CD4-positive, alpha-beta T cell (primary cell): ENCODE measurements at regions of chr12 and their contacts with region 1.

Region 1: DNA sequence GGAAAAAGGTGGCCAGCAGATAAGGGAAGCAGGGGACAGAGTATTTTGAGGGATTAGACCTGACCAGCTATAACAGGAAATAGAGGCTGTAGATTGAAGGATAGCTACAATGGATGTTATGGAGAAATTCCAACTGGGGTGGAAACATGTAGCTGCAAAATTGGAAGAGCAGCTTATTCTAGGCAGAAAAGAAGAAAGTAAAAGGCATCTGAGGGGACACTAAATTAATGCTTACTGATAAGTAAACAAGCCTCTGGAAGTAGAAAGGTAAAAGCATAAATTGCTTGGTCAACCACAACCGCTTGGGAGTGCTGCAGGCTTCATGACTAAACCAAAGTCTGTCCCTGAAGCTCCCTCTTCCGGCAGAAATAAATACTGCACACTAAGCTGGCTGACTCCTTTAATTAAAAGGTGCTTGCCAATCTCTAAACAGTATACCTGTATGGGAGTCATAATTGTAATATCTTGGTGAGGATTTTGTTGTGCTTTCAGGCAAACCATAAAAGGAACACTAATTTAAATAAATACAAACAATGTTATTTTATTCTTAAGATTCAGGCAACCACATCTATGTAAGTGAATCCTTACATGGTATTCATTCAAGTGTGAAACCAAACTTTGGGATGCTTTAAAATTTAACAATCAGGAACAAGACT is 7.7 kb downstream of the UBC start:
- DNase-seq: peak; percentile 70 to 96 (median 88)
- ATAC-seq: peak; percentile 93
- H3K4me3 ChIP-seq: no peak overlapping the region
- H3K4me3 Mint-ChIP-seq: no peak overlapping the region
- H3K27ac ChIP-seq: no peak overlapping the region
- H3K27ac Mint-ChIP-seq: peak overlapping the region; percentile 28
- H3K4me1 ChIP-seq: peaks cover 17% of the 10 kb centered on the region
- H3K4me1 Mint-ChIP-seq: peaks cover 28% of the 10 kb centered on the region
- H3K27me3 ChIP-seq: no peaks in the 10 kb centered on the region
- H3K27me3 Mint-ChIP-seq: no peaks in the 10 kb centered on the region
- CTCF ChIP-seq: peak; percentile 100

Region 2: GRCh38 chr12:124917135-124917840 is 10.6 kb after region 1 on chr12:
- CTCF ChIA-PET with region 1: interaction called, 65 read pairs
- POLR2A ChIA-PET with region 1: interaction called, 43 read pairs
- intact Hi-C with region 1: no loop called
- DNase-seq: peak; percentile 82 to 98 (median 88)
- ATAC-seq: peak; percentile 78
- H3K4me3 ChIP-seq: peak overlapping the region; percentile 54
- H3K4me3 Mint-ChIP-seq: peak overlapping the region; percentile 86
- H3K27ac ChIP-seq: peak overlapping the region; percentile 84 to 97
- H3K27ac Mint-ChIP-seq: peak overlapping the region; percentile 99
- H3K4me1 ChIP-seq: peaks cover 78% of the 10 kb centered on the region
- H3K4me1 Mint-ChIP-seq: peaks cover 89% of the 10 kb centered on the region
- H3K27me3 ChIP-seq: no peaks in the 10 kb centered on the region
- H3K27me3 Mint-ChIP-seq: peaks cover 17% of the 10 kb centered on the region
- CTCF ChIP-seq: no peak

Region 3: DNA sequence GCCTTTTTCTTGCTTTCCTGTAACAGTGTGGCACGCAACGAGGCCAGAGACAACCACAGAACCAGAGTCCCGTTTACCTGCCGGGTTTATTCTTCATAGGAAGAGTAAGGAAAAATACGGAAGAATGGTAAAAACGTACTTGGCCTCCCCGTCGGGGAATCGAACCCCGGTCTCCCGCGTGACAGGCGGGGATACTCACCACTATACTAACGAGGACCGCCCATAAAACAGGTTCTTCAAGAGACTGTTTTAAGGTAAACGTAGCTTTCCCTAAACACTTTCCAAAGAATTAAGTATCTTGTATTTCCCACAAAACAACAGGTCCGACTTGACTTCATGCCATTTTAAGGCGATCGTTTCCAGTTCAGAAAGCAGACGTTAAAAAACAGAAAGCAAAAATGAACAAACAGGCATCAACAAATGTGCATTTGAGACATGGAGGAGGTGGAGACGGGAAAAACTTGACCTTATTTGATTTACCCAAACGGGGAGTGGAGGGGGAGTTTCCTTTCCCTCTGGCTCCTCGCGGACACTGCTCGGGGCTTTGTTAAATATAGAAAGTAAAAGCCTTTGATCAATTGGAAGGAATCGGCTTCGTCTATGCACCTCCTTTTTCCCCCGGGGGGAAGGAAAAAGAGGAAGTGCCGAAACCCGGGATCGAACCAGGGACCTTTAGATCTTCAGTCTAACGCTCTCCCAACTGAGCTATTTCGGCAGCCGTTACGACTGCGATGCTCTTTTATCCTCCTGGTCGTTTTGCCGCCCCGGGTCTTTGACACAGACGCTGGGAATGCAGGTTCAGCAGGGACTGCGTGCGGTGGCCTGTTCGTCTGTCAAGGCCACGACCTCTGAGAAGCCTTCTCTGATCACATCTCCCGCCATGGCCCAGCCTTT is 20.7 kb after region 1 on chr12:
- CTCF ChIA-PET with region 1: interaction called, 65 read pairs
- POLR2A ChIA-PET with region 1: interaction called, 22 read pairs
- intact Hi-C with region 1: loop called in 1 of 2 experiments (anchors 2 kb)
- DNase-seq: peak; percentile 81 to 95 (median 92)
- ATAC-seq: peak; percentile 90
- H3K4me3 ChIP-seq: peak overlapping the region; percentile 69
- H3K4me3 Mint-ChIP-seq: peak overlapping the region; percentile 95
- H3K27ac ChIP-seq: peak overlapping the region; percentile 66 to 67
- H3K27ac Mint-ChIP-seq: peak overlapping the region; percentile 98
- H3K4me1 ChIP-seq: peaks cover 24% of the 10 kb centered on the region
- H3K4me1 Mint-ChIP-seq: peaks cover 24% of the 10 kb centered on the region
- H3K27me3 ChIP-seq: no peaks in the 10 kb centered on the region
- H3K27me3 Mint-ChIP-seq: peaks cover 11% of the 10 kb centered on the region
- CTCF ChIP-seq: no peak

Region 4: DNA sequence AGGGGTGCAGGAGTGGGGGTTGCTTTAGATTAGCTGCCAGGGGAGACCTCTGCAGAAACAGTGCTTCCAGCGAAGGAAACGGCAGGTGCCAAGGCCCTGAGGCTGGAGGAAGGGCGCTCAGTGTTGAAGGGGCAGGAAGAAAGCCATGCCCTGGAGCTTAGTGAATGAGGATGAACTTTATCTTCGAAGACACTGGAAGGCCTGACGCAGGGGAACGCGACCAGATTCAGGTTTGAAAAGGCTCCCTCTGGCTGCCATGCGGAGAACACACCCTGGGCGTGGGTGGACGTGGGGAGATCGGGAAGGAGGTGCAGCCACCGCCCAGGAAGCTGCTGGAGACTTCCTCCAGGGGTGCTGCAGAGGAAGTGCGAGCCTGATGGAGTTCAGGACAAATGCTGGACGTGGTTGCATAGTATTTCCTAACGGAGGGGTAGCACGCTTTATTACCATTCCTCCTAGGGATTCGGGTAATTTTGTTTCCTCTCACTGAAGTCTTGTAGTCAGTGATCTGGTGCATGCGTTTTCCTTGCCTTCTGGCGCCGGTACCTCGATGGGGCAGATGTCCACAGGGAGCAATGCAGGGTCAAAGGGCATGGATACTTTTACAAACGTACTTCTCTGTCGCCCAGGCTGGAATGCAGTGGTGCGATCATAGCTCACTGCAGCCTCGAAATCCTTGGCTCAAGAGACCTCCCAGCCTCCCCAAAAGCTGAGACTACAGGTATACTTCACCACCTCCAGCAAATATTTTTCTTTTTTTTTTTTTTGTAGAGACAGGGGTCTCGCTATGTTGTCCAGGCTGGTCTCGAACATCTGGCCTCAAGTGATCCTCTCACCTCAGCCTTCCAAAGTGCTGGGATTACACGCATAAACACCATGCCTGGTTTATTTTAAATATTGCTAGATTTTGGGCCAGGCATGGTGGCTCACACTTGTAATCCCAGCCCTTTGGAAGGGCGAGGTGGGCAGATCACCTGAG is 34.1 kb after region 1 on chr12:
- CTCF ChIA-PET with region 1: interaction called, 213 read pairs
- POLR2A ChIA-PET with region 1: interaction called, 90 read pairs
- intact Hi-C with region 1: loop called (anchors 1 kb)
- DNase-seq: peak; percentile 66 to 91 (median 76)
- ATAC-seq: peak; percentile 63
- H3K4me3 ChIP-seq: peak overlapping the region; percentile 70
- H3K4me3 Mint-ChIP-seq: no peak overlapping the region
- H3K27ac ChIP-seq: peak overlapping the region in 1 of 2 donors; percentile 9
- H3K27ac Mint-ChIP-seq: no peak overlapping the region
- H3K4me1 ChIP-seq: peaks cover 28% of the 10 kb centered on the region
- H3K4me1 Mint-ChIP-seq: peaks cover 5% of the 10 kb centered on the region
- H3K27me3 ChIP-seq: no peaks in the 10 kb centered on the region
- H3K27me3 Mint-ChIP-seq: no peaks in the 10 kb centered on the region
- CTCF ChIP-seq: peak; percentile 97

Region 5: GRCh38 chr12:124946447-124946793 is 39.7 kb after region 1 on chr12:
- CTCF ChIA-PET with region 1: interaction called, 213 read pairs
- POLR2A ChIA-PET with region 1: interaction called, 90 read pairs
- intact Hi-C with region 1: no loop called
- DNase-seq: no peak
- ATAC-seq: no peak
- H3K4me3 ChIP-seq: no peak overlapping the region
- H3K4me3 Mint-ChIP-seq: no peak overlapping the region
- H3K27ac ChIP-seq: no peak overlapping the region
- H3K27ac Mint-ChIP-seq: no peak overlapping the region
- H3K4me1 ChIP-seq: no peaks in the 10 kb centered on the region
- H3K4me1 Mint-ChIP-seq: no peaks in the 10 kb centered on the region
- H3K27me3 ChIP-seq: no peaks in the 10 kb centered on the region
- H3K27me3 Mint-ChIP-seq: no peaks in the 10 kb centered on the region
- CTCF ChIP-seq: no peak